GM12878 (cell line): ENCODE measurements at regions of chr11 and their contacts with region 1.

Region 1: DNA sequence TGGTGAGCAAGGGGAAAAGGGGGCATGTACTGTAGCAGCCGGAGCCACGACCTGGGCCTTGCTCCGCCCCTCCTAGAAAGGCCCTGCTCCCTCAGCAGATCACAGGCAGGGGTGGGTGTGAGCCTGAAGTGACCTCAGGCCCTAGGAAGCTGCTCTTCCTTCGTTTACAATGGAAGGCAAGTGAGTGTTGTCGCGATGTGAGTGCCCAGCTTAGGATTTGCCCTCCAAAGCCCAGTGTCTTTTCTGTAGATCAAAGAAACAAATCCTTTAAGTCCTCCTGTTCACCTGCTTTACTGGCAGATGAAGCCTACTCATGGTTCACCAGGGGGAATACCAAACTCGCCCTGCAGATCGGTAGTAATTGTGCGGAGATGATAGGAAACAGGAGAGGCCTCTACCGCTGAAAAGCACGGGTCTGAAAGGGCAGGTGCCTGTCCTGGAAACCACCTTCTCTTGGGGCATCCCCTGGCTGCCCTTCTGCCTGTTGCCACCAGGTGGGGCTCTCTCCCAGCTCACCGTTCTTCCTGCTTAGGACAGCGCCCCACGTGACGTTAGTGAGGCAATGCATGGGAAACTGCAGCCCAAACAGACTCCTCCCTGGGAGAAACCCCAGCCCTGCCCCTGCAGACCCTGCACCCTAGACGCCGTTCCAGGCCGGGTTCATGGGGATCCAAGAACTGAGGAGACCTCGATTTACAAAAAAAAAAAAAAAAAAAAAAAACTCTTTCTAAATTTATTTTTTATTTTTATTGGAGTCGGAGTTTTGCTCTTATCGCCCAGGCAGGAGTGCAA is 45.9 kb upstream of the RAB1B start:
- DNase-seq: peak; percentile 96
- ATAC-seq: peak; percentile 97
- H3K4me3 ChIP-seq: no peak overlapping the region; the same call in 1 of the 2 replicates
- H3K27ac ChIP-seq: peak overlapping the region; percentile 92
- H3K4me1 ChIP-seq: peaks cover 17% of the 10 kb centered on the region
- H3K27me3 ChIP-seq: no peaks in the 10 kb centered on the region
- CTCF ChIP-seq: peak; percentile 100; a peak in 5 of 6 replicates
- EP300 ChIP-seq: peak; percentile 70 to 85; a peak in 3 of 4 replicates
- POLR2A ChIP-seq: peak; percentile 62
- RAD21 ChIP-seq: peak; percentile 90

Region 2: DNA sequence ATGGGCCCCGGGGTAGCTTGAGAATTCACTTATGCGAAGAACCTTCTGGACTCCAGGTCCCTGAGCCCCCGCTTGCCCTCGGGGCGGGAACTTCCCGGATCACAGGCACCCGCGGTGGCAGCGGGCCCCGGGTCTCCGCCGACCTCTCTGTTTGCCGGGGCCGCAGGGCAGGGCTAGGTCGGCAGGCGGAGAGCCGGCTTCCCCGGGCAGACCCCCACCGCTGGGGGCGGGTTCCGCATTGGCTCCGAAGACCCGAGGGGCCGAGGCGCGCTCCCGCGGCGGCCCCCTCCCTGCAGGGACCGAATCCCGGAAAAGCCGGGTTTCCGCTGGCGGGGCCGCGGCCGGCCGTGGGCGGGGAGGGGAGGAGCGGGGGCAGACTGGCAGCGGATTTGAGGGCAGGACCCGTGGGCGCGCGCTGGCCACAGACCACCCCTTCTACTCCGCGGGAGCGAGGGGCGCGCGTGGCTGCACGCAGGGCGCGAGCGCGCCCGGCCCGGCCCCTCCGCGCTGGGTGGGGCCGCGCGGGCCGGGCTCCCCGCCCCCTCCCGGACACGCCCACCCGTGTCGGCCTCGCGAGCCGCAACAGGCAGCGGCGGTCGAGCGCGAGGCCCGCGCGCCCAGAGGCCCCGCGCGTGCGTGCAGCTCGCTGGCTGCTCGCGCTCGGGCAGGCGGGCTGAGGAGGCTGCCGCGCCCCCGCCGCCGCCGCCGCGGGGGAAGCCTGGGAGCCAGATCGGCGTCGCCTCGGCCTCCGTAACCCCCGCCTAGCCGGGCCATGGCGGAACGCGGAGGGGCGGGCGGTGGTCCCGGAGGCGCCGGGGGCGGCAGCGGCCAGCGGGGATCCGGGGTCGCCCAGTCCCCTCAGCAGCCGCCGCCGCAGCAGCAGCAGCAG is 152.6 kb before region 1 on chr11 and contains the start of gene PACS1:
- CTCF ChIA-PET with region 1: interaction called, 23 read pairs
- POLR2A ChIA-PET with region 1: interaction called, 5 read pairs
- RAD21 ChIA-PET with region 1: interaction called, 7 read pairs
- SMC1A ChIA-PET with region 1: interaction called, 14 read pairs
- in situ Hi-C with region 1: no loop called
- intact Hi-C with region 1: loop called (anchors 5 kb)
- DNase-seq: no peak
- ATAC-seq: peak; percentile 61
- H3K4me3 ChIP-seq: peak within 1 kb of the TSS; percentile 94
- H3K27ac ChIP-seq: peak within 1 kb of the TSS; percentile 83
- H3K4me1 ChIP-seq: peaks cover 26% of the 10 kb centered on the region
- H3K27me3 ChIP-seq: no peaks in the 10 kb centered on the region
- CTCF ChIP-seq: no peak
- EP300 ChIP-seq: no peak
- POLR2A ChIP-seq: peak; percentile 68
- RAD21 ChIP-seq: no peak
- polyA plus RNA-seq, gene PACS1: 1.1 to 1.2 TPM

Region 3: GRCh38 chr11:66087148-66087908 is 135.2 kb before region 1 on chr11:
- CTCF ChIA-PET with region 1: no interaction called
- POLR2A ChIA-PET with region 1: no interaction called
- RAD21 ChIA-PET with region 1: no interaction called
- SMC1A ChIA-PET with region 1: no interaction called
- in situ Hi-C with region 1: no loop called
- intact Hi-C with region 1: no loop called
- DNase-seq: no peak
- ATAC-seq: peak; percentile 46
- H3K4me3 ChIP-seq: peak overlapping the region; percentile 0; the same call in 1 of the 2 replicates
- H3K27ac ChIP-seq: no peak overlapping the region
- H3K4me1 ChIP-seq: peaks cover 18% of the 10 kb centered on the region
- H3K27me3 ChIP-seq: no peaks in the 10 kb centered on the region
- CTCF ChIP-seq: no peak
- EP300 ChIP-seq: no peak
- POLR2A ChIP-seq: no peak
- RAD21 ChIP-seq: no peak

Region 4: DNA sequence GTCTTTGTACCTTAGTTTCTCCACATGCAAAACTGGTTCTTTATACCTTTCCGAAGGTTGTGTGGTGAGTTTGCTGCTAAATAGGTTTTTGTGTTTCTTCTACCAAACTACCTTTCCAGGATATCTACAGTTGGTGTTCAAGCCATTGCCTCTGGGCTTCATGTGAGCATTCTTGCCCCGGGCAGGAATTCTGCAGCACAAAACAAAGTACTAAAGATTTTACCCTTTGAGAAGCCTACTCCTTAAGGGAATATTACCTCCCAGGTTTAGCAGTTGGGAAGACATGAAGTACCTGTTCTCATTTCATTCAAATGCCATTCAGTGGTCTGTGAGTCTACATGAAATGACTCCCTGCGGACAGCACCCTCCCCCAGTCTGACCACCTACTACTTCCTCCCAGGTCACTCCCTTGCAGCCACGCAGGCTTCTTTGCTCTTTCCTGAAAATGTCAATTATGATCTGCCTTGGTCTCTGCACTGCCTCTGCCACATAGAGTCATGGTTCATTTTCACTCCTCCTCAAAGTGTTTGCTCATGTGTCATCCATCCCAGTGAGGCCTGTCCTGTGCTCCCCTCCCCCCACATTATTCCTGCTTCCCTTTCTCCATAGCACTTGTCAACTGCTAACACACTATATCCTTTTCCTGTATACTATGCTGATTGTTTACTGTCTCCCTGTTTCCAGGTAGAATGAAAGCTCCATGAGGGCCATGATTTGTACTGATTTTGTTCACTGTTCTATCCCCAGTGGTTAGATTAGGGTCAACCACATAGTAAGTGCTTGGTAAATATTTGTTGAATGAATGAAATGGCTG is 115.6 kb before region 1 on chr11:
- CTCF ChIA-PET with region 1: no interaction called
- POLR2A ChIA-PET with region 1: no interaction called
- RAD21 ChIA-PET with region 1: no interaction called
- SMC1A ChIA-PET with region 1: no interaction called
- in situ Hi-C with region 1: no loop called
- intact Hi-C with region 1: no loop called
- DNase-seq: no peak
- ATAC-seq: no peak
- H3K4me3 ChIP-seq: no peak overlapping the region
- H3K27ac ChIP-seq: peak overlapping the region; percentile 40; the same call in 1 of the 2 replicates
- H3K4me1 ChIP-seq: peaks cover 55% of the 10 kb centered on the region
- H3K27me3 ChIP-seq: no peaks in the 10 kb centered on the region
- CTCF ChIP-seq: no peak
- EP300 ChIP-seq: no peak
- POLR2A ChIP-seq: no peak
- RAD21 ChIP-seq: no peak

Region 5: DNA sequence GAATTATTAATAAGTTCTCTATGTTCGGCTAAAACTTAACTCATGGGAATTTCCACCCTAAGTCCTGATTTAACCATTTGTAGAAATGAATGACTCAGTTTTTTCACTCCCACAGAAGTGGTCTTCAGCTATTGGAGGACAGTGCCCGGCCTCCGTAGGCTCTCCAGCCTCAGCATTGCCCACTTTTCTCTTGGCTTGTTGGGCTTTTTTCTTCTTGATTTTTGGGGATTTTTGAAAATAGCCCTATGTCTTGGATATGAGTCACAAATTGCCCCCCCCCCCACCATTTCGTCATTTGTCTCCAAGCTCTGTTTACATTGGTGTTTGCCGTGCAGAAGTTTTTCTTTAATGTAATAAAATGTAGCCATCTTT is 85.8 kb before region 1 on chr11:
- CTCF ChIA-PET with region 1: interaction called, 46 read pairs
- POLR2A ChIA-PET with region 1: interaction called, 16 read pairs
- RAD21 ChIA-PET with region 1: interaction called, 35 read pairs
- SMC1A ChIA-PET with region 1: interaction called, 37 read pairs
- in situ Hi-C with region 1: no loop called
- intact Hi-C with region 1: loop called (anchors 1 kb)
- DNase-seq: no peak
- ATAC-seq: peak; percentile 36
- H3K4me3 ChIP-seq: peak overlapping the region; percentile 42; the same call in 1 of the 2 replicates
- H3K27ac ChIP-seq: peak overlapping the region; percentile 85
- H3K4me1 ChIP-seq: peaks cover 69% of the 10 kb centered on the region
- H3K27me3 ChIP-seq: no peaks in the 10 kb centered on the region
- CTCF ChIP-seq: no peak
- EP300 ChIP-seq: peak in 1 of 2 experiments; percentile 9; a peak in 1 of 4 replicates
- POLR2A ChIP-seq: no peak
- RAD21 ChIP-seq: no peak

Region 6: GRCh38 chr11:66181628-66182321 is 40.8 kb before region 1 on chr11:
- CTCF ChIA-PET with region 1: interaction called, 11 read pairs
- POLR2A ChIA-PET with region 1: no interaction called
- RAD21 ChIA-PET with region 1: interaction called, 8 read pairs
- SMC1A ChIA-PET with region 1: interaction called, 4 read pairs
- in situ Hi-C with region 1: no loop called
- intact Hi-C with region 1: no loop called
- DNase-seq: no peak
- ATAC-seq: no peak
- H3K4me3 ChIP-seq: no peak overlapping the region
- H3K27ac ChIP-seq: no peak overlapping the region
- H3K4me1 ChIP-seq: peaks cover 7% of the 10 kb centered on the region
- H3K27me3 ChIP-seq: no peaks in the 10 kb centered on the region
- CTCF ChIP-seq: no peak
- EP300 ChIP-seq: no peak
- POLR2A ChIP-seq: no peak
- RAD21 ChIP-seq: no peak

Region 7: GRCh38 chr11:66268283-66268951 is 45.9 kb after region 1 on chr11 and contains the start of gene RAB1B:
- CTCF ChIA-PET with region 1: interaction called, 6 read pairs
- POLR2A ChIA-PET with region 1: interaction called, 12 read pairs
- RAD21 ChIA-PET with region 1: interaction called, 3 read pairs
- SMC1A ChIA-PET with region 1: interaction called, 3 read pairs
- in situ Hi-C with region 1: no loop called
- intact Hi-C with region 1: no loop called
- DNase-seq: peak; percentile 98
- ATAC-seq: peak; percentile 89
- H3K4me3 ChIP-seq: peak within 1 kb of the TSS; percentile 96
- H3K27ac ChIP-seq: peak within 1 kb of the TSS; percentile 94
- H3K4me1 ChIP-seq: peaks cover 11% of the 10 kb centered on the region
- H3K27me3 ChIP-seq: no peaks in the 10 kb centered on the region
- CTCF ChIP-seq: no peak
- EP300 ChIP-seq: no peak
- POLR2A ChIP-seq: peak; percentile 75
- RAD21 ChIP-seq: no peak
- polyA plus RNA-seq, gene RAB1B: 10.4 to 15.6 TPM

Region 8: DNA sequence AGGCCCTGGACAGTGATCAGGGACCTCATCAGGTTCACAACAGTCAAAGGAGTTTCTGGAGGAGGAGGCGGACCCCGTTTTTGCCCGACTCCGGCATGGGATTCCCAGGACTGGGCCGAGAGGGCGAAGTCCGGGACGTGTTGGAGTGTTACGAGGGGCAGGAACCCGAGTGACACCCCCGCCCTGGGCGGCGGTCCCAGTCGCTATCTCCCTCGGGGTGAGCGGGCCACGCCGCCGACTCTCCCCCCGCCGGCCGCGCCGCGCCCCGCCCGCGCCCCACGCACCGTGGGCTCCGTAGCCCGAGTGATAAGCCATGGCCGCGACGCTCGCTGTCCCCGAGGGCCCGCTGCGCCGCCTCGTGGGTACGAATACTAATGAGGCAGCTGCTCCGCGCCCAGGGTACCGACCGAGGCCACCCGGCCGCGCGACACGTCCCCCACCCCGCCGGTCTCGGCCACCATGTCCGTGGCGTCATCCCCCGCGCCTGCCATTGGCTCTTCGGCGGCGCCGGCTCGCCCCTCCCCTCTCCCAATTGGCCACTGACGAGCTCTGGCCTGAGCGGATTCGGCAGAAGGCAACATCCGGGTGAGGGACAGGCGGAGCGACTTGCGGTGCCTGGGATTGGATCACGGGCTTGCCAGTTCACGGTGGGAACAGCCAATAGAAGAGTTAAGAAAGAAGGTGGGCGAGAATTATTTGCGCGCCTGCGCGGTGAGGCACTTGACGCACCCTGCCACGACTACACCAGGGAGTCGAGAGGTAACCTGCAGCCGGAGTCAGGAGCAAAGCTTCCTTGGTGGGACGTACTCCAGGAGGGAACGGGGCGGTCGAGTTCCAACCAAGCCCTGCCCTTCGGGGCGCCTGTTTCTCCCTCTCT is 66.4 kb after region 1 on chr11 and contains the start of gene YIF1A:
- CTCF ChIA-PET with region 1: interaction called, 16 read pairs
- POLR2A ChIA-PET with region 1: interaction called, 3 read pairs
- RAD21 ChIA-PET with region 1: interaction called, 6 read pairs
- SMC1A ChIA-PET with region 1: interaction called, 3 read pairs
- in situ Hi-C with region 1: no loop called
- intact Hi-C with region 1: no loop called
- DNase-seq: peak; percentile 98
- ATAC-seq: peak; percentile 97
- H3K4me3 ChIP-seq: peak within 1 kb of the TSS; percentile 83
- H3K27ac ChIP-seq: peak within 1 kb of the TSS; percentile 87
- H3K4me1 ChIP-seq: peaks cover 15% of the 10 kb centered on the region
- H3K27me3 ChIP-seq: peaks cover 2 to 7% of the 10 kb centered on the region in 2 experiments; a peak in 2 of 4 replicates
- CTCF ChIP-seq: peak in 1 of 3 experiments; percentile 16; a peak in 2 of 6 replicates
- EP300 ChIP-seq: no peak
- POLR2A ChIP-seq: peak; percentile 90
- RAD21 ChIP-seq: no peak
- polyA plus RNA-seq, gene YIF1A: 6.6 to 17.5 TPM

Region 9: DNA sequence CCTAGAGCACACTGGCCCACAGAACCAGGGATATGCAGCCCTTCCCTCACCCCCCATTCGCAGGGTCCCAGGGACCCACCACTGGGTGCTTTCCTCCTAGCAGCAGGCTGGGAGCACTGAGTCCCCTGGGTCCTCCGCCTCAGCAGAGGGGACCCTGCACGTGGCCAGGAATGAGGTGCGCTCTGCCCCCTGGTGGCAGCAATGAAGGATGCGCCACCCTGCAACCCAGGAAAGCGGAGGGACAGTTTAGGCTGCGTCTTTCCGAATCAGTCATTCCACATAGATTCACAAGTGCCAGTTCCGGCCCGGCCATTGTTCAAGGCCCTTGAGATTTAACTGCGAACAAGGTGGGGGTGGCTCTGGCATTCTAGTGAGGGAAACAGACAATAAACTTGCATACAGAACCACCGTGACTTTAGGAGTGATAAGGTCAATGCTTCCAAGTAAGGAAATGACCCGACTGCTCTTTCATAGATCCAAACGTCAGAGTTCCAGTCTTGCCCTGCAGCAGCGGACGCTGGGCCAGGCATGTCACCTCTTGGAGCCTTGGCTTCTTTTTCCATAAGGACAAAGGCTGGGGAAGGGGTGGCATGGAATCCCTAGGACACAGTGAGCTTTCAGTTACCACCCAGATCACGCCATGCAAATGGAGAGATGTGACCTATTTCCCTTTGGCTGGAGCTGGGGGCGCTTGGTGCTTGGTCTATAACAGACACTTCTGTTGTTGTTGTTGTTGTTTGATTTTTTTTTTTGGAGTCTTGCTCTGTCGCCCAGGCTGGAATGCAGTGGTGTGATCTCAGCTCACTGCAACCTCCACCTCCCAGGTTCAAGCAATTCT is 106.0 kb after region 1 on chr11:
- CTCF ChIA-PET with region 1: interaction called, 3 read pairs
- POLR2A ChIA-PET with region 1: no interaction called
- RAD21 ChIA-PET with region 1: no interaction called
- SMC1A ChIA-PET with region 1: no interaction called
- in situ Hi-C with region 1: no loop called
- intact Hi-C with region 1: loop called (anchors 2 kb)
- DNase-seq: no peak
- ATAC-seq: peak; percentile 97
- H3K4me3 ChIP-seq: no peak overlapping the region
- H3K27ac ChIP-seq: no peak overlapping the region
- H3K4me1 ChIP-seq: peaks cover 10% of the 10 kb centered on the region; the same call in 1 of the 2 replicates
- H3K27me3 ChIP-seq: no peaks in the 10 kb centered on the region; a peak in 1 of 4 replicates
- CTCF ChIP-seq: peak; percentile 91 to 94 (median 92)
- EP300 ChIP-seq: no peak
- POLR2A ChIP-seq: no peak
- RAD21 ChIP-seq: peak; percentile 81

Region 10: GRCh38 chr11:66545701-66546367 is 323.3 kb after region 1 on chr11 and contains the start of gene ZDHHC24:
- CTCF ChIA-PET with region 1: no interaction called
- POLR2A ChIA-PET with region 1: no interaction called
- RAD21 ChIA-PET with region 1: no interaction called
- SMC1A ChIA-PET with region 1: no interaction called
- in situ Hi-C with region 1: no loop called
- intact Hi-C with region 1: no loop called
- DNase-seq: peak; percentile 81
- ATAC-seq: peak; percentile 91
- H3K4me3 ChIP-seq: peak within 1 kb of the TSS; percentile 86
- H3K27ac ChIP-seq: peak within 1 kb of the TSS; percentile 72
- H3K4me1 ChIP-seq: peaks cover 10% of the 10 kb centered on the region
- H3K27me3 ChIP-seq: no peaks in the 10 kb centered on the region
- CTCF ChIP-seq: no peak
- EP300 ChIP-seq: no peak
- POLR2A ChIP-seq: peak; percentile 94
- RAD21 ChIP-seq: no peak
- polyA plus RNA-seq, gene ZDHHC24: 0.86 to 0.89 TPM